CD4-positive, alpha-beta memory T cell (primary cell): ENCODE measurements at regions of chr7 and their contacts with region 1.

Region 1: DNA sequence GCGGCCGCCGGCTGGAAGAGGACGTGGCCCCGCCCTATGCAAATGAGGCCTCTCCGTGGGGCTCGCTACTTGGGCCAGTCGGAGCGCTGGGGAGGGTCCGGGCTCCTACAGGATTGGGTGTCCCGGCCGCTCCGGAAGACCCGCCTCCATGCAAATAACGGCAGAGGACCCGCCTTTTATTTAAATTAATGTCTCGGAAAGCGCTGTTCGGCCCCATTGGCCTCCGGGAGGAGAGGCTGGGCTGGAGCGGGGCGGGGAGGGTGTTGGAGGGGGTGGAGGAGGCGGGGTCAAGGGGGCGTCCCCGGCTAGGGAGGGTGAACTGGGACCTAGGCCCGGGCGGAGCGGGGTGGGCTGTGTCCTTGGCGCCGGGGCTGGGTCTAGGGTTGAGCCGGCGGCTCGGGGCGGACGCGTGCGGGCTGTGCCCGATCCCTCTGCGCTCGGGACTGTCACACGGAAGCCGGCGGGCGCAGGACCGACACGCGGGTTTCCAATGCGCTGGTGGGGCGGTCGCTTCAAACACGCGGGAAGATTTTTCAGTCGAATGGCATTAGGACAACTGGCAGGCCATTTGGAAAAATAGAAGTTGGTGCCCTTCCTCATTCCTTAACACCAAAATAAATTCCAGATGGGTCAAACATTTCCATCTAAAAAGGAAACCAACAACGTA is 344 bp upstream of the POLM start:
- DNase-seq: peak; percentile 96 to 99 (median 99)
- H3K4me3 ChIP-seq: peak overlapping the region; percentile 42 to 62
- H3K4me3 Mint-ChIP-seq: peak overlapping the region; percentile 80 to 95 (median 86)
- H3K27ac ChIP-seq: peak overlapping the region; percentile 81
- H3K27ac Mint-ChIP-seq: peak overlapping the region; percentile 57 to 93 (median 78)
- H3K4me1 ChIP-seq: peaks cover 23% of the 10 kb centered on the region
- H3K4me1 Mint-ChIP-seq: peaks cover 15 to 39% (median 20%) of the 10 kb centered on the region in 4 donors
- H3K27me3 ChIP-seq: no peaks in the 10 kb centered on the region
- H3K27me3 Mint-ChIP-seq: no peaks in the 10 kb centered on the region

Region 2: DNA sequence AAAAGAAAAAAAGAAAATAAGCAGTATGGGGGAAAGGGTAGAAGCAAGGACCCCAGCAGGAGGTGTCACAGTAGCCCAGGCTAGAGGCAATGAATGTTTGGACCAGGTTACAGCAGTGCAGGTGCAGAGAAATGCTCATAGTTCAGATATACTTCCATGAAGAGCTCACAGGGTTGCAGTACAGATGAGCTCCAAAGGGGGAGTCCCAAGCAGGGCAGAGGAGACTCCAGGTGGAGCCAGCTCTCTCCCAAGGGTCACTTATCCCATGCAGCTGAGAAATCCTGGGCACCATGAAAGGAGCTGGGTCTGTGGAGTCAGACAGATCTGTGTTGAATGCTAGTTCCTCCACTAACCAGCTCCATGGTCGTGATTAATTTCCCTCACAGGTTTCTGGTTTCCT is 1345.7 kb before region 1 on chr7:
- CTCF ChIA-PET with region 1: no interaction called
- POLR2A ChIA-PET with region 1: no interaction called
- intact Hi-C with region 1: no loop called
- DNase-seq: no peak
- H3K4me3 ChIP-seq: no peak overlapping the region
- H3K4me3 Mint-ChIP-seq: no peak overlapping the region
- H3K27ac ChIP-seq: no peak overlapping the region
- H3K27ac Mint-ChIP-seq: no peak overlapping the region
- H3K4me1 ChIP-seq: no peaks in the 10 kb centered on the region
- H3K4me1 Mint-ChIP-seq: no peaks in the 10 kb centered on the region
- H3K27me3 ChIP-seq: no peaks in the 10 kb centered on the region
- H3K27me3 Mint-ChIP-seq: peaks cover 0 to 4% of the 10 kb centered on the region in 2 donors

Region 3: DNA sequence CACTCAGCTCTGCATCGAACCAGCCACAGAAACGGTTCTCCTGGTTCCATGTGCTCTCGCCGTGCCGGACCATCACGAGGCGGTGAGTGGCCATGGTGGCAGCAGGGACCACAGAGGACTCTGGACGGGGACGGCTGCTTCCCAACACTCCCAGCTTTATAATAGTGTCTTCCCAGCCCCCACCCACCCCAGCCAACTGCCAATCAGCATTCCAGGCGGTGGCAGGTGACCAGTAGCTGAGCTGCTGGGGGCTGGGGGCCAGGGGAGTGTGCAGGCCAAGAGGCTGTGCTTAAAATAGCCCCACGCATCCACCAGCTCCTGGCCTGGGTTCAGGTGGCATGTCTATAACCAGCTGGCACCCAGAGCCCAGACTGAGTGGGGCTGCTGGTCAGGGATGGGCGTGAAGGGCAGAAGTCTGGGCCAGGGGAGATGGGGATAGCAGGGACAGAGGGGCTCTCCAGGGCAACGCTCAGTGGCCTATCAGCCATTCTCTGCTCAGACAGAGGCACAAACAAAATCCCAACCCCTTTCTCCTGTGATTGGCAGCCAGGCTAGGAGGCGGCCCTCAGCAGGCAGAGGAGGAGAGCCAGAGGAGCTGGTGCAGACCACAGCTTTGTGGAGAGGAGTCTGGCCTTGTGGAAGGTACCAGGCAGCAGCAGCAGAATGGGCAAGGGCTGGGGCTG is 17.1 kb before region 1 on chr7 and contains the start of gene PGAM2:
- CTCF ChIA-PET with region 1: interaction called, 3 read pairs
- POLR2A ChIA-PET with region 1: interaction called, 32 read pairs
- intact Hi-C with region 1: no loop called
- DNase-seq: no peak
- H3K4me3 ChIP-seq: no peak within 1 kb of the TSS
- H3K4me3 Mint-ChIP-seq: peak within 1 kb of the TSS in 1 of 8 donors; percentile 59
- H3K27ac ChIP-seq: no peak within 1 kb of the TSS
- H3K27ac Mint-ChIP-seq: peak within 1 kb of the TSS in 3 of 7 donors; percentile 61 to 85 (median 61)
- H3K4me1 ChIP-seq: peaks cover 20% of the 10 kb centered on the region
- H3K4me1 Mint-ChIP-seq: peaks cover 13 to 34% (median 22%) of the 10 kb centered on the region in 4 donors
- H3K27me3 ChIP-seq: no peaks in the 10 kb centered on the region
- H3K27me3 Mint-ChIP-seq: no peaks in the 10 kb centered on the region
- total RNA-seq, gene PGAM2: 1.1 to 1.5 TPM

Region 4: GRCh38 chr7:44123190-44124003 is 40.7 kb after region 1 on chr7 and contains the start of gene POLD2:
- CTCF ChIA-PET with region 1: interaction called, 5 read pairs
- POLR2A ChIA-PET with region 1: interaction called, 20 read pairs
- intact Hi-C with region 1: loop called (anchors 1 kb)
- DNase-seq: peak; percentile 95 to 97 (median 96)
- H3K4me3 ChIP-seq: peak within 1 kb of the TSS; percentile 72 to 78
- H3K4me3 Mint-ChIP-seq: peak within 1 kb of the TSS; percentile 87 to 95 (median 93)
- H3K27ac ChIP-seq: peak within 1 kb of the TSS; percentile 76
- H3K27ac Mint-ChIP-seq: peak within 1 kb of the TSS; percentile 90 to 97 (median 96)
- H3K4me1 ChIP-seq: peaks cover 22% of the 10 kb centered on the region
- H3K4me1 Mint-ChIP-seq: peaks cover 20 to 37% (median 27%) of the 10 kb centered on the region in 4 donors
- H3K27me3 ChIP-seq: no peaks in the 10 kb centered on the region
- H3K27me3 Mint-ChIP-seq: no peaks in the 10 kb centered on the region
- total RNA-seq, gene POLD2: 48.7 to 61.0 TPM

Region 5: DNA sequence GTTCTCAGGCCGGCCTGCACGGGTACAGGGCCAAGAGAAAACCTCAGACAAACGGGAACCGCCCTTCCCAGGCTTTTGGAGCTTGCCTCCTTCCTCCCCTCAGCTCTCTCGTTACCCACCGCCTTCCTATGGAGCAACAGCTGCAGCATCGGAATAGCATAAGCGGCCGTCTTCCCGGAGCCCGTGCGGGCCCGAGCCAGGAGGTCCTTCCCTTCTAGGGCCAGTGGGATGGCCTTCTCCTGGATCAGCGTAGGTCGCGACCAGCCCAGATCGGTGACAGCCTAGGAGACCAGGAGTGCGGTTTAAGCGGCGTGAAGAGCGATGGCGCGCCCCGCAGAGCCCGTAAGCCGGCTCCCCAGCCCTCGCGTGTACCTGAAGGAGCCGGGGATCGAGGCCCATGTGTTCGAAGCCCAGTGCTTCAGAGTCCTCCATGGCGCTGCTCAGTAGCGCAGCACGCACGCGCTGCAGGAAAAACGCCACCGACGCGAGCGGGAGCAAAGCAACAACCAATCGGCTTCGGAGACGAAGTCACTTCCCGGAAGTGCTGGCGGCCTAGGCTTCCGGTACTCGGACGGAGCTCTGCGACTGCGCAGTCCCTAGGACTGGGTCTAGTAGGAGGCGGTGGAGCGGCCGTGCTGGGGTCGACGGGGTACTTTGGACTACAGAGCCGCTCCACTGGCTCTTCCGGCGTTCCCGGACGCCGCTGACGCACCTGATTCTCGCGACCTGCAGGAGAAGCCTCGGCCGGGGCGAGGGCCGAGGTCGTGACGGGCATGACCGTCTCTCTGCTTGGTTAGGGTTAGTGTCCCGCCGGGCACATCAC is 491.0 kb after region 1 on chr7 and contains the start of gene DDX56:
- CTCF ChIA-PET with region 1: no interaction called
- POLR2A ChIA-PET with region 1: interaction called, 4 read pairs
- intact Hi-C with region 1: loop called (anchors 5 kb)
- DNase-seq: peak; percentile 87 to 93 (median 88)
- H3K4me3 ChIP-seq: peak within 1 kb of the TSS; percentile 93
- H3K4me3 Mint-ChIP-seq: peak within 1 kb of the TSS; percentile 94 to 99 (median 96)
- H3K27ac ChIP-seq: peak within 1 kb of the TSS; percentile 94
- H3K27ac Mint-ChIP-seq: peak within 1 kb of the TSS; percentile 97 to 99 (median 99)
- H3K4me1 ChIP-seq: peaks cover 30% of the 10 kb centered on the region
- H3K4me1 Mint-ChIP-seq: peaks cover 26 to 41% (median 34%) of the 10 kb centered on the region in 4 donors
- H3K27me3 ChIP-seq: no peaks in the 10 kb centered on the region
- H3K27me3 Mint-ChIP-seq: no peaks in the 10 kb centered on the region
- total RNA-seq, gene DDX56: 109 to 114 TPM